ENCODE measurements at regions of chr2 and their contacts with region 1.

Region 1: GRCh38 chr2:63856303-63856603 is 14.6 kb downstream of the UGP2 start:
- DNase-seq: peak; percentile 77
- H3K4me3 Mint-ChIP-seq: peak overlapping the region; percentile 54
- H3K27ac Mint-ChIP-seq: peak overlapping the region; percentile 90
- H3K4me1 Mint-ChIP-seq: peaks cover 59% of the 10 kb centered on the region
- H3K27me3 Mint-ChIP-seq: no peaks in the 10 kb centered on the region

Region 2: GRCh38 chr2:63270717-63271116 is 585.5 kb before region 1 on chr2:
- CTCF ChIA-PET with region 1: no interaction called
- POLR2A ChIA-PET with region 1: no interaction called
- intact Hi-C with region 1: no loop called
- DNase-seq: no peak
- H3K4me3 Mint-ChIP-seq: no peak overlapping the region
- H3K27ac Mint-ChIP-seq: no peak overlapping the region
- H3K4me1 Mint-ChIP-seq: no peaks in the 10 kb centered on the region
- H3K27me3 Mint-ChIP-seq: no peaks in the 10 kb centered on the region

Region 3: GRCh38 chr2:63903003-63903402 is 46.8 kb after region 1 on chr2:
- CTCF ChIA-PET with region 1: interaction called, 4 read pairs
- POLR2A ChIA-PET with region 1: no interaction called
- intact Hi-C with region 1: loop called (anchors 5 kb)
- DNase-seq: no peak
- H3K4me3 Mint-ChIP-seq: no peak overlapping the region
- H3K27ac Mint-ChIP-seq: no peak overlapping the region
- H3K4me1 Mint-ChIP-seq: peaks cover 3% of the 10 kb centered on the region
- H3K27me3 Mint-ChIP-seq: no peaks in the 10 kb centered on the region